ENCODE measurements at regions of chr4 and their contacts with region 1.

Region 1: DNA sequence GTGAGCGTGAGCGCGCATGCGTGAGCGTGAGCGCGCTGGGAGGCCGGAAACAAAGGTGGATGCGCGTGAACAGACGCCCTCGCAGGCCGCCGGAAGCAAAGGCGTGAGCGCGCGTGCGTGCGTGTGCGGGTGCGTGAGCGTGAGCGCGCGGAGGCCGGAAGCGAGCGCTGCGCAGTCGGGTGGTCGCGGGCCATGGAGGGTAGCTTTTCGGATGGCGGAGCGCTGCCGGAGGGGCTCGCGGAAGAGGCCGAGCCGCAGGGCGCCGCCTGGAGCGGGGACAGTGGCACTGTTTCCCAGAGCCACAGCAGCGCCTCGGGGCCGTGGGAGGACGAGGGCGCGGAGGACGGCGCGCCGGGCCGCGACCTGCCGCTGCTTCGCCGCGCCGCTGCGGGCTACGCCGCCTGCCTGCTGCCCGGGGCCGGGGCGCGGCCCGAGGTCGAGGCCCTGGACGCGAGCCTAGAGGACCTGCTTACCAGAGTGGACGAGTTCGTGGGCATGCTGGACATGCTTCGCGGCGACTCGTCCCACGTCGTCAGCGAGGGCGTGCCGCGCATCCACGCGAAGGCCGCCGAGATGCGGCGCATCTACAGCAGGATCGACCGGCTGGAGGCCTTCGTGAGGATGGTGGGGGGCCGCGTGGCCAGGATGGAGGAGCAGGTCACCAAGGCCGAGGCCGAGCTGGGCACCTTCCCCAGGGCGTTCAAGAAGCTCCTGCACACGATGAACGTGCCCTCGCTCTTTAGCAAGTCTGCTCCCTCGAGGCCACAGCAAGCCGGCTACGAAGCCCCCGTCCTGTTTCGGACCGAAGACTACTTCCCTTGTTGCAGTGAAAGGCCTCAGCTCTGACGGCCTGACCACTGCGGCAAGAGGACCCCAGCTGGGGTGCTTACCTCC is at the start of gene BLOC1S4:
- DNase-seq: peak; percentile 86
- ATAC-seq: peak; percentile 81
- H3K4me3 ChIP-seq: peak within 1 kb of the TSS; percentile 92
- H3K27ac ChIP-seq: peak within 1 kb of the TSS; percentile 81
- H3K4me1 ChIP-seq: peaks cover 7% of the 10 kb centered on the region
- H3K27me3 ChIP-seq: no peaks in the 10 kb centered on the region
- CTCF ChIP-seq: no peak
- EP300 ChIP-seq: no peak
- POLR2A ChIP-seq: peak; percentile 97
- RAD21 ChIP-seq: no peak
- polyA plus RNA-seq, gene BLOC1S4: 2.7 to 6.3 TPM

Region 2: GRCh38 chr4:6673660-6674499 is 42.4 kb before region 1 on chr4:
- CTCF ChIA-PET with region 1: interaction called, 36 read pairs
- POLR2A ChIA-PET with region 1: interaction called, 3 read pairs
- RAD21 ChIA-PET with region 1: interaction called, 19 read pairs
- SMC1A ChIA-PET with region 1: interaction called, 33 read pairs
- in situ Hi-C with region 1: no loop called
- intact Hi-C with region 1: loop called (anchors 2 kb)
- DNase-seq: peak; percentile 80
- ATAC-seq: peak; percentile 92
- H3K4me3 ChIP-seq: peak overlapping the region; percentile 74
- H3K27ac ChIP-seq: peak overlapping the region; percentile 45
- H3K4me1 ChIP-seq: peaks cover 6% of the 10 kb centered on the region; the same call in 1 of the 2 replicates
- H3K27me3 ChIP-seq: no peaks in the 10 kb centered on the region
- CTCF ChIP-seq: no peak
- EP300 ChIP-seq: peak in 1 of 2 experiments; percentile 27; a peak in 1 of 4 replicates
- POLR2A ChIP-seq: peak; percentile 92
- RAD21 ChIP-seq: no peak

Region 3: GRCh38 chr4:6768539-6768905 is 52.3 kb after region 1 on chr4:
- CTCF ChIA-PET with region 1: interaction called, 13 read pairs
- POLR2A ChIA-PET with region 1: interaction called, 7 read pairs
- RAD21 ChIA-PET with region 1: interaction called, 5 read pairs
- SMC1A ChIA-PET with region 1: interaction called, 5 read pairs
- in situ Hi-C with region 1: no loop called
- intact Hi-C with region 1: no loop called
- DNase-seq: no peak
- ATAC-seq: no peak
- H3K4me3 ChIP-seq: no peak overlapping the region
- H3K27ac ChIP-seq: no peak overlapping the region
- H3K4me1 ChIP-seq: peaks cover 14% of the 10 kb centered on the region
- H3K27me3 ChIP-seq: no peaks in the 10 kb centered on the region
- CTCF ChIP-seq: no peak
- EP300 ChIP-seq: no peak
- POLR2A ChIP-seq: no peak
- RAD21 ChIP-seq: no peak

Region 4: DNA sequence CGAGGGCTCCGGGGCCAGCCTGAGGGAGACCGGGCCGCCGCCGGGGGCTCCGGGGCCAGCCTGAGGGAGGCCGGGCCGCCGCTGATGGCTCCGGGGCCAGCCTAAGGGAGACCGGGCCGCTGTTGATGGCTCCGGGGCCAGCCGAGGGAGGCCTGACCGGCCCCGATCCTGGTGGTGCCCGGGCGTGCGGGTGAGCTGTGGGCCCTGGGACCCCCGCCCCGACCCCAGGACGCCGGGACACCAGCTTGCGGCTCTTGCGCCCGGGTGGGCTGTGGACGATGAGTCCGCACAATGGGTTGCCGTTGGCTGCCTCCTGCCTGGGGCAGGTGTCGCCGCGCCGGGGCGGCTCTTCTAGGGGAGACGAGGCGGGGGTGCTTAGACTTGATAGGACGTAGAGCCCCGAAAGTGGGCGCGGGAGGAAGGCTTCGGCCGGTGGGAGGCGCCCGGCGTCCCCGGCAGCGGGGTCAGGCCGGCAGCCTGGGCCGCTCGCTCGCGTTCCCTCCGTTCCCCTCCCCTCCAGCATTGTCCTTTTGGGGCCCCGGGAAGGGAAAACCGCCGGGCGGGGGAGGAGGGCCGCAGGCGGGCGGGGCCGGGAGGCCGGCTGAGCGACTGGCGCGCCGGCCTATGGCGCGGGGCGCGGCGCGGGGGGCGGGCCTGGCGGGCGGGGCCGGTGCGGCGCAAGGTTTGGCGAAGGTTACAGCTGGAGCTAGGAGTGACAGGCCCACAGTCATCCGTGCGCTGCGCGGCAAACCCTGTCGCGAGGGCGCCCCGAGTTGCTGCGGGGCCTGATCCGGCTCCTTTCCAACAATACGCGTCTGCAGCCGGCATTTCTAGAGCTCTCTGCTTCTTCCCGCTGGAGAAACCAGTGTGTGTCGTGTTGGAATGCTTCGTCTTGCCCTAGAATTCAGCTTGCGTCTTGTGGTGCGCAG is 67.1 kb after region 1 on chr4:
- CTCF ChIA-PET with region 1: interaction called, 19 read pairs
- POLR2A ChIA-PET with region 1: interaction called, 6 read pairs
- RAD21 ChIA-PET with region 1: interaction called, 9 read pairs
- SMC1A ChIA-PET with region 1: interaction called, 4 read pairs
- in situ Hi-C with region 1: no loop called
- intact Hi-C with region 1: loop called (anchors 2 kb)
- DNase-seq: peak; percentile 27
- ATAC-seq: peak; percentile 87
- H3K4me3 ChIP-seq: peak overlapping the region; percentile 89
- H3K27ac ChIP-seq: peak overlapping the region; percentile 88
- H3K4me1 ChIP-seq: 0 out of 2 replicates have a peak, but pooled peaks cover 6% of the 10 kb centered on the region
- H3K27me3 ChIP-seq: no peaks in the 10 kb centered on the region
- CTCF ChIP-seq: peak; percentile 19 to 42 (median 25); a peak in 3 of 6 replicates
- EP300 ChIP-seq: no peak
- POLR2A ChIP-seq: peak; percentile 78; the same call in 1 of the 2 replicates
- RAD21 ChIP-seq: peak; percentile 15; the same call in 1 of the 2 replicates

Region 5: GRCh38 chr4:6885951-6886557 is 169.8 kb after region 1 on chr4:
- CTCF ChIA-PET with region 1: interaction called, 64 read pairs
- POLR2A ChIA-PET with region 1: no interaction called
- RAD21 ChIA-PET with region 1: interaction called, 11 read pairs
- SMC1A ChIA-PET with region 1: interaction called, 20 read pairs
- in situ Hi-C with region 1: no loop called
- intact Hi-C with region 1: no loop called
- DNase-seq: peak; percentile 34
- ATAC-seq: peak; percentile 94
- H3K4me3 ChIP-seq: no peak overlapping the region
- H3K27ac ChIP-seq: no peak overlapping the region
- H3K4me1 ChIP-seq: no peaks in the 10 kb centered on the region
- H3K27me3 ChIP-seq: no peaks in the 10 kb centered on the region
- CTCF ChIP-seq: peak; percentile 26 to 51 (median 35); a peak in 4 of 6 replicates
- EP300 ChIP-seq: no peak
- POLR2A ChIP-seq: no peak
- RAD21 ChIP-seq: 0 out of 2 replicates have a peak, but pooled peaks have one; percentile 1

Region 6: GRCh38 chr4:7081891-7082471 is 365.7 kb after region 1 on chr4:
- CTCF ChIA-PET with region 1: interaction called, 11 read pairs
- POLR2A ChIA-PET with region 1: no interaction called
- RAD21 ChIA-PET with region 1: interaction called, 3 read pairs
- SMC1A ChIA-PET with region 1: no interaction called
- in situ Hi-C with region 1: no loop called
- intact Hi-C with region 1: no loop called
- DNase-seq: no peak
- ATAC-seq: peak; percentile 90
- H3K4me3 ChIP-seq: no peak overlapping the region
- H3K27ac ChIP-seq: no peak overlapping the region
- H3K4me1 ChIP-seq: no peaks in the 10 kb centered on the region
- H3K27me3 ChIP-seq: no peaks in the 10 kb centered on the region
- CTCF ChIP-seq: peak; percentile 58 to 69 (median 61)
- EP300 ChIP-seq: no peak
- POLR2A ChIP-seq: no peak
- RAD21 ChIP-seq: peak; percentile 58

Measured in GM12878 (cell line).